ENCODE measurements at regions of chr1 and their contacts with region 1.

Region 1: GRCh38 chr1:89114662-89115061 is 11.3 kb downstream of the GBP2 start:
- DNase-seq: no peak
- ATAC-seq: no peak
- H3K4me3 ChIP-seq: no peak overlapping the region
- H3K27ac ChIP-seq: no peak overlapping the region
- H3K4me1 ChIP-seq: no peaks in the 10 kb centered on the region
- H3K27me3 ChIP-seq: no peaks in the 10 kb centered on the region
- CTCF ChIP-seq: no peak

Region 2: DNA sequence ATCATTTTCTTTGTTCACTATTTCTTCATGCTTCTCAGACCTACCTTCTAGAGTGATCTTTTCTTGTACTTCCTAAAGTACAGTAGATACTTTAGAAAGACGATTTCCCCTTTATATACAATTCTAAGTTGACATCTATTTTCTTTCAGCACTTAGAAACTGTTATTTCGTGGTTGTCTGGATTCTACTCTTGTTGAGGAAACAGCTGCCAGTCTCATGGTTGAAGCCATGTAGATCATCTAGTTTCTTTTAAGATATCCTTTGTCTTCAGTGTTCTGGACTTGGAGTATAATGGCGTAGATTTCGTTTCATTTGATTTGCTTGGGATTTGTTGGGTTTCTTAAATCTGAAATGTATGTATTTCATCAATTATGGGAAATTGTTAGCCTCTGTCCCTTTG is 362.9 kb before region 1 on chr1:
- intact Hi-C with region 1: no loop called
- DNase-seq: no peak
- ATAC-seq: no peak
- H3K4me3 ChIP-seq: no peak overlapping the region
- H3K27ac ChIP-seq: no peak overlapping the region
- H3K4me1 ChIP-seq: no peaks in the 10 kb centered on the region
- H3K27me3 ChIP-seq: no peaks in the 10 kb centered on the region
- CTCF ChIP-seq: no peak

Region 3: DNA sequence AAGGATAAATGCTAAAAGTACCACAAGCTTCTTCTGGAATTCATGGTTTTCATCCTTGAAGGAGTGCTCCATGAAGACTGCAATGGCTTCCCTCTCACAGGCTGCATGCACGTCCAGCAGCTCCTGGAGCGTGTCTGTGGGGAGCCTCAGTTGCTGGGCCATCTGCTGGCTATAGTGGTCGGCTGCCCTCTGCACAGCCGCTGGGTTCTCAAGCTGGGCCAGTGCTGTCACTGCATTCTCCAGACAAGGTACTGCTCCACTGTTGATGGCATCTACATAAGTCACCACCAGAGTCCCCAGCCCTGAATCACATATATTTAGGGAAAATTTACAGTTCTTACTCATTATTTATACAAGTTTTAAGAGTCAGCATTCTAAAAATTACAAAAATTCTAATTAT is 75.4 kb after region 1 on chr1:
- intact Hi-C with region 1: loop called in 1 of 10 experiments (anchors 5 kb)
- DNase-seq: no peak
- ATAC-seq: no peak
- H3K4me3 ChIP-seq: no peak overlapping the region
- H3K27ac ChIP-seq: no peak overlapping the region
- H3K4me1 ChIP-seq: peaks cover 0 to 27% (median 7%) of the 10 kb centered on the region in 9 donors
- H3K27me3 ChIP-seq: no peaks in the 10 kb centered on the region
- CTCF ChIP-seq: no peak

Measured in heart right ventricle (tissue), 16 donors.